Activated naive CD4-positive, alpha-beta T cell treated with anti-CD3 and anti-CD28 coated beads for 36 hours (primary cell): ENCODE measurements at regions of chr14 and their contacts with region 1.

Region 1: GRCh38 chr14:73949744-73950734 is at the starts of genes COQ6 and FAM161B:
- DNase-seq: peak; percentile 95
- H3K4me3 Mint-ChIP-seq: peak within 1 kb of the TSS; percentile 98
- H3K27ac Mint-ChIP-seq: peak within 1 kb of the TSS; percentile 90
- H3K4me1 Mint-ChIP-seq: peaks cover 21% of the 10 kb centered on the region
- H3K27me3 Mint-ChIP-seq: no peaks in the 10 kb centered on the region
- total RNA-seq, gene COQ6: 17.6 to 17.7 TPM
- total RNA-seq, gene FAM161B: 1.5 to 1.6 TPM

Region 2: GRCh38 chr14:73633116-73634010 is 316.7 kb before region 1 on chr14:
- CTCF ChIA-PET with region 1: no interaction called
- intact Hi-C with region 1: loop called (anchors 2 kb)
- DNase-seq: peak; percentile 74
- H3K4me3 Mint-ChIP-seq: peak overlapping the region; percentile 65
- H3K27ac Mint-ChIP-seq: no peak overlapping the region
- H3K4me1 Mint-ChIP-seq: peaks cover 5% of the 10 kb centered on the region
- H3K27me3 Mint-ChIP-seq: peaks cover 6% of the 10 kb centered on the region

Region 3: DNA sequence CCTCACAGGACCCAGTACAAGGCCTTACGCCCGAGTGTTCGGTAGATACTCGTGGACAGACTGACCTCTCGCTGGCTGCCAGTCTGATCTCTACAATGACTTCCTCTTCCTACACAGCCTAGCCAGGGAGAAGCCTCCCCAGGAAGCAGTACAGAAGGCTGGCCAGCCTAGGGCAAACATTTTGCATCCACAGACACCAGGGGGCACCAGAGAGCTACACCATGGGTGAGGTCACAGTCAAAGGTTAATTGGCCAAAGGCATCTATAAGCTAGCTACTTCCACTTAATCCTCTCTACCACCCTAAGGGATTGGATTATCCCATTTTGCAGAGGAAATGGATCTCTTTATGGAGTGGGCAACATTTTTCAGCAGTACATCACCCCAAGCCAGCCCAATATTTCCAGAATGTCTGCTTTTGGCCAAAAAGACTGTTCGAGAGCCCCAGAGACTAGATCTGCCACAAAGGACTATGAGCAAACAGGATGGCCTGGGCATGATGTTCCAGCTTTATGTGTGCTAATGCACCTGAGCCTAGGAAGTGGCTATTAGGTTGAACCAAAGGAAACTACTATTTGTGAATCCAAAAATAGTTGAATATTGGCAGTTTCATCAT is 221.2 kb before region 1 on chr14:
- CTCF ChIA-PET with region 1: no interaction called
- intact Hi-C with region 1: loop called (anchors 1 kb)
- DNase-seq: peak; percentile 94
- H3K4me3 Mint-ChIP-seq: no peak overlapping the region
- H3K27ac Mint-ChIP-seq: peak overlapping the region; percentile 74
- H3K4me1 Mint-ChIP-seq: peaks cover 24% of the 10 kb centered on the region
- H3K27me3 Mint-ChIP-seq: no peaks in the 10 kb centered on the region

Region 4: DNA sequence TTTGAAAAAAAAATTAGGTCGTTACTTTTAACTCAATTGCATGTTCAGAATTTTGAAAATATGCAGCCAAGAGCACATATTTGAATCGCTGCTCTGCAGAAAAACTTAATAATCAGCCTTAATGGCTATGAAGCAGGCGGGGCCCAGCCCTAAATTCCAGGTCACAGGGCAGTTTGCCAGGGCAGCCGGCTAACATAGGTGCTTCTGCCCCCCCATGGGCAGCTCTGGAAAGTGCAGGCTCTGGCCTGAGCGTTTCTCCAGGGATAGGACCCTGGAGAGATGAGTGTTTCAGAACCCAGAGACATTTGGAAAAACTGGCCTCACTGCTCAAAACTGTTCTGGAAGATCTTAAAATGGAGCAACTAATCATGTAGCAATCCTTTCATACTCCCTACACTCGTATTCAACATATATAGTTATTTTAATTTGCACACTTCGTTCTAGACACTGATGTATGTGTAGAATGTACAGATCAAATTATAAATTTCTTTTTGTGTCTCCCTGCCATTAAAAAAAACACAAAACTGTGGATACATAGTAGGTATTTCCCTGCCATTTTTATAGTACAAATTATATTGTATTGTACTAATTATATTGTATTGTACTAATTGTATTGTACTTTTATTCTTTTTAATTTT is 124.4 kb before region 1 on chr14:
- CTCF ChIA-PET with region 1: interaction called, 4 read pairs
- intact Hi-C with region 1: loop called (anchors 1 kb)
- DNase-seq: peak; percentile 90
- H3K4me3 Mint-ChIP-seq: no peak overlapping the region
- H3K27ac Mint-ChIP-seq: no peak overlapping the region
- H3K4me1 Mint-ChIP-seq: peaks cover 14% of the 10 kb centered on the region
- H3K27me3 Mint-ChIP-seq: no peaks in the 10 kb centered on the region

Region 5: DNA sequence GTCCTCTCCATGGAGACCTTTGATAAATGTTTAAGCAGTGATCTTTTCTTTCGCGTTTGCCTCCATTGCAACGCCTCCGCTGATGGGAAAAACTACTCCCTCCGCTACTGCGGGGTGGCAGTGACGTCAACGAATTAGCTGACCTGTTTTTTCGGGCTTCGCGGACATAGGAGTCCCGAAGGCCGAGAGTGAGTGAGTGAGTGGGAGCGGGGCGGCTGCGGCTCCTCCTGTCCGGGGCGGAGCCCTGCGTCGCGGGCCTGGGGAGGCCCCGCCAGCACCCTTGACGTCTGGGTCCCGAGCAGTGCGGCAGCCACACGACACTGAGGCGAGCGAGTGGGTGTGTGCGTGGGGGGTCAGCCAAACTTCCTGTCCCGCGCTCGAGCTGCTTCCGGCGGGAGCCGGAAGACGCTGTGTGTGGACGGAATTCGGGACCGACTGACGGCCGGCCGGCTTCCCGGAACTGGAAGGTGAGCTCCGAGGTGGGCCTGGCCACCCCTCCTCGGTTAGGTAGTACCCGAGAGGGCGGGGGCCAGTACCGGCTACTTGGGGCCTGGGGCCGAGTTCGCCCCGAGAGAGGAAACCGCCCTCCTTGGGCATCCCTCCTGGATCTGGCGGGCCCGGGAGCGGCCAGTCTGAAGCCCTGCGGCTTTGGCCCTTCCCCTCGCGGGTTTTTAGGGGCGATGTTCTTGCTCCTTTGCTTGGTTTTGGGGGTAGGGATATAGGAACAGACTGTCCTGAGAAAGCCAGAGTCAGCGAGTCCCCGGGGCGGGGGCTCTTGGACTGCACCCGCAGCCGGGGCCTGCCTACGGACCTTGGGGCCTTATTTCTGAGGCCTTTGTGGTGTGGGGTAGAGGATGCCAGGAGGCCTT is 63.4 kb before region 1 on chr14 and contains the start of gene ZNF410:
- CTCF ChIA-PET with region 1: no interaction called
- intact Hi-C with region 1: loop called (anchors 1 kb)
- DNase-seq: peak; percentile 95
- H3K4me3 Mint-ChIP-seq: peak within 1 kb of the TSS; percentile 88
- H3K27ac Mint-ChIP-seq: peak within 1 kb of the TSS; percentile 94
- H3K4me1 Mint-ChIP-seq: peaks cover 46% of the 10 kb centered on the region
- H3K27me3 Mint-ChIP-seq: no peaks in the 10 kb centered on the region
- total RNA-seq, gene ZNF410: 51.0 to 56.8 TPM

Region 6: DNA sequence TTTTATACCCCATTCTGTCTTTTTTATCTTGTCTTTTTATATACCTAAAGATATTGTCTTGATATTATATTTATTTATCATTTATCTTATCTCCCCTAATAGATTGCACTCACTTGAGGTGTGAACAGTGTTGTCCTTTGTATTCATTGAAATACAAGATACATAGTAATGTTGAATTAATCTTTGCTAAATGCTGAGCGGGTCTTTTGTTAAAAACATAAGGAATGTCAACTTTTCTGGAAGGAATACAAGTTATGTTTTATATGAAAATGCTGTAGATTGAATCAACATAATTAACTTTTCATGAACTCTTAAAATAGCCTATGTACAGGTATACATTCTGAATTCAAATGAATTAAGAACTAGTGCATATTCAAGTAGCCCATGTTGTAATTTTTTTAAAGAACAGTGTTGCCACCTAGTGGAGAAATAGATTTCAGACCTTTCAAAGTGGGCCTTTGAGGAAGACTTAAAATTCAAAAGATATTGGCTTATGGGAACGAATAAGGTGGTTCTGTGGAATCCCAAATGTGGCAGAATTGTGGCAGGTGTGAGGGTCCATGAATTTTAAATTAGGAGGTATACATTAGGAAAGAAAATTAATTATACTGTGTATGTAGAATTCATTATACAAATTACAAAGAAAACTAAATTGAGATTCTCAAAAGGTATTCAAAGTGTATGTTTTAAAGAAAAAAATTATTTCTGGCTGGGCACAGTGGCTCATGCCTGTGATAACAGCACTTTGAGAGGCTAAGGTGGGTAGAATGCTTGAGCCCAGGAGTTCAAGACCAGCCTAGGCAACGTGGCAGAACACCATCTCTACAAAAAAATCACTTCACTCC is 88.2 kb after region 1 on chr14:
- CTCF ChIA-PET with region 1: no interaction called
- intact Hi-C with region 1: loop called (anchors 5 kb)
- DNase-seq: peak; percentile 8
- H3K4me3 Mint-ChIP-seq: no peak overlapping the region
- H3K27ac Mint-ChIP-seq: no peak overlapping the region
- H3K4me1 Mint-ChIP-seq: no peaks in the 10 kb centered on the region
- H3K27me3 Mint-ChIP-seq: no peaks in the 10 kb centered on the region

Region 7: GRCh38 chr14:74612350-74613021 is 662.4 kb after region 1 on chr14:
- CTCF ChIA-PET with region 1: no interaction called
- intact Hi-C with region 1: no loop called
- DNase-seq: peak; percentile 77
- H3K4me3 Mint-ChIP-seq: peak overlapping the region; percentile 62
- H3K27ac Mint-ChIP-seq: no peak overlapping the region
- H3K4me1 Mint-ChIP-seq: peaks cover 40% of the 10 kb centered on the region
- H3K27me3 Mint-ChIP-seq: peaks cover 14% of the 10 kb centered on the region